Colonic mucosa (tissue), 4 donors: ENCODE measurements at regions of chr20 and their contacts with region 1.

Region 1: DNA sequence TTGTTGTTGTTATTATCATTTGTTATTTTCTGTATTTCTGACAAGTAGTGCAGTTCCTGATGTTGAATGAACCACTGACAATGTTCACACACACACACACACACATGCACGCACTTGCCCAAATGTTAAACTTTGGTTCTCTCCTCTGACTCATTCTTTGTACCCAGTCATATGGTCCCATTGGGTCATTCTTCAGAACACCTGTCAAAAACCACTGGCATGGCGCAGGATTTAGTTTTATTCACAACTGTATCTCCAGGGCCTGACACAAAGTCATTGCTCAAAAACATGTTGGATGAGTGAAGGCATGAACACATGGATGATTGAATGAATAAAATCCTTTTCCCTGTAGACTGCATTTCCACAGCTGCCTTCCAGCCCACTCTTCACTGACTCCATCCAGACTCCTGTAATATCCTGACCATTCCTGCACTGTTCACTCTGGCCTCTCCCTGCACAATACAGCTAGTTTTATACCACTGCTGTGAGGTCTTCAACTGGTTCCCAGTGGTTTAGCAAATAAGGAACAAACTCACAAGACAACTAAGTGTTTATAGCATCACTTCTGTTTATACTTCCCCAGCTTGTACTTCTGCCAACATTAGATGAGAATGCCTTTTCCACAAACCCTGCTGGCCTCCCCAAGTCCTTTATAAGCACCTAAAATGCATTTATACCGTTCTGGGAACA is 6.9 kb upstream of the CST11 start:
- DNase-seq: no peak
- H3K4me3 ChIP-seq: no peak overlapping the region
- H3K27ac ChIP-seq: no peak overlapping the region
- H3K4me1 ChIP-seq: no peaks in the 10 kb centered on the region
- H3K27me3 ChIP-seq: no peaks in the 10 kb centered on the region
- CTCF ChIP-seq: no peak

Region 2: DNA sequence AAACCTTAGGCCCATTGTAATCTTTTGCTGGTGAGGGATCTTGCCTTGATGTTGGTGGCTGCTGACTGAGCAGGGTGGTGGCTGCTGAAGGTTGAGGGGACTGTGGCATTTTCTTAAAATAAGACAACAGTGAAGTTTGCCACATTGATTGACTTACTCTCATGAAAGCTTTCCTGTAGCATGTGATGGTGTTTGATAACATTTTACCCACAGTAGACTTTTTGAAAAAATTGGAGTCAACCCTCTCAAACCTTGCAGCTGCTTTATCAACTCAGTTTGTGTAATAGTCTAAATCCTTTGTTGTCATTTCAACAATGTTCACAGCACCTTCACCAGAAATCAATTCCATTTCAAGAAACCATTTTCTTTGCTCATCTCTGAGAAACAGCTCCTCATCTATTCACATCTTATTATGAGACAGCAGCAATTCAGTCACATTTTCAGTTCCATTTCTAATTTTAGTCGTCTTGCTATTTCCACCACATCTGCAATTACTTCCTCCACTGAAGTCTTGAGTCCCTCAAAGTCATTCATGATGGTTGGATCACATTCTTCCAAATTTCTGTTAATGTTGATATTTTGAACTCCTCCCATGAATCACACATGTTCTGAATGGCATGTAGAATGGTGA is 71.4 kb after region 1 on chr20:
- intact Hi-C with region 1: loop called (anchors 10 kb)
- DNase-seq: no peak
- H3K4me3 ChIP-seq: no peak overlapping the region
- H3K27ac ChIP-seq: no peak overlapping the region
- H3K4me1 ChIP-seq: no peaks in the 10 kb centered on the region
- H3K27me3 ChIP-seq: no peaks in the 10 kb centered on the region
- CTCF ChIP-seq: no peak